ENCODE measurements at regions of chr19 and their contacts with region 1.

Region 1: GRCh38 chr19:9597027-9597426 is 12.7 kb upstream of the ZNF121 start:
- DNase-seq: no peak
- H3K4me3 ChIP-seq: no peak overlapping the region
- H3K27ac ChIP-seq: no peak overlapping the region
- H3K4me1 ChIP-seq: no peaks in the 10 kb centered on the region
- H3K27me3 ChIP-seq: no peaks in the 10 kb centered on the region
- CTCF ChIP-seq: no peak
- EP300 ChIP-seq: no peak
- POLR2A ChIP-seq: no peak
- RAD21 ChIP-seq: no peak

Region 2: GRCh38 chr19:9552536-9553274 is 44.3 kb before region 1 on chr19:
- CTCF ChIA-PET with region 1: no interaction called
- POLR2A ChIA-PET with region 1: no interaction called
- DNase-seq: no peak
- H3K4me3 ChIP-seq: no peak overlapping the region
- H3K27ac ChIP-seq: no peak overlapping the region
- H3K4me1 ChIP-seq: no peaks in the 10 kb centered on the region
- H3K27me3 ChIP-seq: no peaks in the 10 kb centered on the region
- CTCF ChIP-seq: no peak
- EP300 ChIP-seq: no peak
- POLR2A ChIP-seq: no peak
- RAD21 ChIP-seq: no peak

Region 3: GRCh38 chr19:9584073-9584833 is 12.8 kb before region 1 on chr19 and contains the start of gene ZNF121:
- CTCF ChIA-PET with region 1: interaction called, 35 read pairs
- POLR2A ChIA-PET with region 1: interaction called, 8 read pairs
- DNase-seq: peak; percentile 56 to 96
- H3K4me3 ChIP-seq: peak within 1 kb of the TSS; percentile 76 to 99 (median 89)
- H3K27ac ChIP-seq: peak within 1 kb of the TSS; percentile 96
- H3K4me1 ChIP-seq: peaks cover 0 to 6% (median 3%) of the 10 kb centered on the region in 4 experiments; a peak in 5 of 7 replicates
- H3K27me3 ChIP-seq: no peaks in the 10 kb centered on the region
- CTCF ChIP-seq: no peak
- EP300 ChIP-seq: no peak
- POLR2A ChIP-seq: peak; percentile 96 to 99
- RAD21 ChIP-seq: no peak
- total RNA-seq, gene ZNF121: 194 and 220 TPM in 2 replicates

Region 4: GRCh38 chr19:9610484-9611113 is 13.6 kb after region 1 on chr19:
- CTCF ChIA-PET with region 1: interaction called, 3 read pairs
- POLR2A ChIA-PET with region 1: interaction called, 15 read pairs
- DNase-seq: no peak
- H3K4me3 ChIP-seq: no peak overlapping the region
- H3K27ac ChIP-seq: no peak overlapping the region
- H3K4me1 ChIP-seq: no peaks in the 10 kb centered on the region
- H3K27me3 ChIP-seq: no peaks in the 10 kb centered on the region; a peak in 1 of 7 replicates
- CTCF ChIP-seq: no peak
- EP300 ChIP-seq: no peak
- POLR2A ChIP-seq: no peak
- RAD21 ChIP-seq: no peak

Measured in H1 (cell line).